ENCODE measurements at regions of chr6 and their contacts with region 1.

Region 1: DNA sequence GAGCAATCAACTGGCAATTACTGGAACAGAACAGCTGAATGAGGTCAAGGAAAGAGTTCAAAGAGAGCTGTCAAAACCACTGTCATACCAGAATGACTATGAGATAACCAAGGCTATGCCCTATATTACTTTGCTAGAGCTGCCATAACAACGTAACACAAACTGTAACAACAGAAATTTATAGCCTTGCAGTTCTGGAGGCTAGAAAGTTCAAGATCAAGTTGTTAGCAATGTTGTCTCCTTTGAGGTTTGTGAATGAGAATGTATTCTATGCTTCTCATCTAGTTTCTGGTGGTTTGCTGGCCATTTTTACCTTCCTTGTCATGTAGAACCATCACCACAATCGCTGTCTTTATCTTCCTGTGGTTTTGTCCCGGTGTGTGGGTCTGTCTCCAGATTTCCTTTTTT is 1323.0 kb upstream of the GJE1 start:
- DNase-seq: peak; percentile 24
- H3K4me3 Mint-ChIP-seq: no peak overlapping the region
- H3K27ac Mint-ChIP-seq: peak overlapping the region; percentile 66
- H3K4me1 Mint-ChIP-seq: peaks cover 26% of the 10 kb centered on the region
- H3K27me3 Mint-ChIP-seq: peaks cover 18% of the 10 kb centered on the region

Region 2: DNA sequence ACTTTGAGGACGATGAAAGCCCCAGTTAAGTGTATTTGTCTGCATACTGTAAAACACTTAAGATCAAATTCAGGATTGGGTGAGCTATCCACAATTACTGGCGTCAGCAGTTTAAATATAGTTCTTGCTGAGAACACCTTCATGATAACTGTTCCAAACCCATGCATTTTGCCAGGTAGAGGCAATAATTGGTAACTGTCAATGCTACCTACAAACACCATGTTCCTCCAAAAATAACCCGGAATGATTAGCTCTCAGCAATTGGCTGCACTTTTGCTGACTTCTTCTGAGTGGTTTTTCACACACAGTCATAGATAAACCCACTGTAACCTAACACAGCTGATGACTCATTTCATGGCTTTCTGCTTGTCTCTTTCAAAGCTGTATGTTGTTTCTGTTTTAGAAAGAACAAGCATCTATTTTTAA is 35.6 kb before region 1 on chr6:
- CTCF ChIA-PET with region 1: no interaction called
- POLR2A ChIA-PET with region 1: interaction called, 13 read pairs
- DNase-seq: peak; percentile 18
- H3K4me3 Mint-ChIP-seq: no peak overlapping the region
- H3K27ac Mint-ChIP-seq: no peak overlapping the region
- H3K4me1 Mint-ChIP-seq: peaks cover 23% of the 10 kb centered on the region
- H3K27me3 Mint-ChIP-seq: peaks cover 14% of the 10 kb centered on the region

Region 3: GRCh38 chr6:140794544-140794943 is 15.2 kb before region 1 on chr6:
- CTCF ChIA-PET with region 1: no interaction called
- POLR2A ChIA-PET with region 1: no interaction called
- DNase-seq: no peak
- H3K4me3 Mint-ChIP-seq: no peak overlapping the region
- H3K27ac Mint-ChIP-seq: no peak overlapping the region
- H3K4me1 Mint-ChIP-seq: no peaks in the 10 kb centered on the region
- H3K27me3 Mint-ChIP-seq: peaks cover 20% of the 10 kb centered on the region